ENCODE measurements at regions of chr12 and their contacts with region 1.

Region 1: DNA sequence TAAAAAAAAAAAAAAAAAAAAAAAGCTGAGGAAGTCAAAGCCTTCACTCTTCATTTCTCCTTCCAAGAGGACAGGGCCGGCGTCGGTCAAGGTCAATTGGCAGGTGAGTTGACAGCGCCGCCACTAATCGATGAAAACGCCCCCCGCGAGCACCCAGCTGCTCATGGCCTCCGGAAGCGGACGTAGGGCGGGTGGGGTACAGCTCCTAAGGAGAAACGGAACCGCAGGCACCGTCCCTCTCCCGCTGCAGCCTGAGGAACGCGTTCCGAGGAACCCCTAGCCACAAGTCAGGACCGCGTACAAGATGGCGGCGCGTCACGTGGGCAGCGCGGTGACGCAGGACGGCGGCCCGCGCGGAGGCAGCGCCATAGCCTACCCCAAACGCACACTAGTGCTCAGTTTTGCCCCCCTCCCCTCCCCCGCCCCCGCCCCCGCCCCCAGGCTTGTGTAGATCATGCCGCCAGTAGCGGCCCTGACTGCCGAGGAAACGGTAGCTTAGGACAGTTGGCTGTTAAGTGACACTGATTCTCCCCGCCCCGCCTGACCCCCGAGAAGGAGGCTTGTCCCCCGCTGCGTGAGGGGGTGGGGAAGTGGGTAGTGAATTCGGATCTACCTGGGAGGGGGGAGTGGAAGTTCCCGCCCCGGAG is at the start of gene ATF1:
- DNase-seq: peak; percentile 78 to 92 (median 90)
- ATAC-seq: peak; percentile 90
- H3K4me3 ChIP-seq: peak within 1 kb of the TSS; percentile 69
- H3K4me3 Mint-ChIP-seq: peak within 1 kb of the TSS; percentile 89 to 97 (median 91)
- H3K27ac ChIP-seq: peak within 1 kb of the TSS; percentile 94
- H3K27ac Mint-ChIP-seq: peak within 1 kb of the TSS; percentile 92 to 99 (median 98)
- H3K4me1 ChIP-seq: peaks cover 12 to 14% of the 10 kb centered on the region in 2 donors
- H3K4me1 Mint-ChIP-seq: peaks cover 30 to 51% (median 45%) of the 10 kb centered on the region in 7 donors
- H3K27me3 ChIP-seq: no peaks in the 10 kb centered on the region
- H3K27me3 Mint-ChIP-seq: no peaks in the 10 kb centered on the region
- total RNA-seq, gene ATF1: 23.8 to 53.9 (median 51.3) TPM

Region 2: GRCh38 chr12:49322708-49323523 is 1440.8 kb before region 1 on chr12 and contains the start of gene TROAP:
- CTCF ChIA-PET with region 1: no interaction called
- POLR2A ChIA-PET with region 1: no interaction called
- intact Hi-C with region 1: loop called in 1 of 2 experiments (anchors 2 kb)
- DNase-seq: peak; percentile 89 to 98 (median 96)
- ATAC-seq: peak; percentile 97
- H3K4me3 ChIP-seq: peak within 1 kb of the TSS; percentile 75
- H3K4me3 Mint-ChIP-seq: peak within 1 kb of the TSS; percentile 86 to 98 (median 92)
- H3K27ac ChIP-seq: peak within 1 kb of the TSS; percentile 72
- H3K27ac Mint-ChIP-seq: peak within 1 kb of the TSS; percentile 29 to 95 (median 83)
- H3K4me1 ChIP-seq: peaks cover 5 to 14% of the 10 kb centered on the region in 2 donors
- H3K4me1 Mint-ChIP-seq: peaks cover 16 to 25% (median 19%) of the 10 kb centered on the region in 7 donors
- H3K27me3 ChIP-seq: no peaks in the 10 kb centered on the region
- H3K27me3 Mint-ChIP-seq: peaks cover 0 to 5% (median 0%) of the 10 kb centered on the region in 5 donors
- total RNA-seq, gene TROAP: 0.83 to 58.2 (median 1.3) TPM in 4 of 5 experiments, not detected in the other

Region 3: DNA sequence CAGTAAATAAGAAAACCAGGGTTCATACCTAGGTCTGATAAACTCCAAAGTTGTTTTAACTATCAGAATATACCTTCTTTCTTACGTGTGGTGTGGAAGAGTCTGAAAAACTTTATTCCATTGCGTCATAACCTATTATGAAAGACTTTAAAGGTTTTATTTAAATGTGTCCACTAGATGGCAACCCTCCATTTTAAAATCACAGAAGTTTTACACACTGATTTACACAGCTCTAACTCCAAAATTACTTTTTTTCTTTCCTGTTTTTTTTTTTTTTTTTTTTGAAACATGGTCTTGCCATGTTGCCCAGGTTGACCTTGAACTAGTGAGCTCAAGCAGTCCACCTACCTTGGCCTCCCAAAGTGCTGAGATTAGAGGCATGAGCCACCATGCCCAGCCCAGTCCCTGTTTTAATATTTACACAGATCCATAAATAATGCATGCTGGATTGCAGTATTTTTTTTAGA is 61.6 kb after region 1 on chr12:
- CTCF ChIA-PET with region 1: interaction called, 6 read pairs
- POLR2A ChIA-PET with region 1: interaction called, 3 read pairs
- intact Hi-C with region 1: loop called (anchors 1 kb)
- DNase-seq: peak in 7 of 9 donors; percentile 45 to 76 (median 69)
- ATAC-seq: peak; percentile 91
- H3K4me3 ChIP-seq: no peak overlapping the region
- H3K4me3 Mint-ChIP-seq: peak overlapping the region in 2 of 10 donors; percentile 34 to 77
- H3K27ac ChIP-seq: peak overlapping the region; percentile 73
- H3K27ac Mint-ChIP-seq: peak overlapping the region; percentile 56 to 99 (median 91)
- H3K4me1 ChIP-seq: peaks cover 0 to 4% of the 10 kb centered on the region in 2 donors
- H3K4me1 Mint-ChIP-seq: peaks cover 0 to 9% (median 6%) of the 10 kb centered on the region in 7 donors
- H3K27me3 ChIP-seq: no peaks in the 10 kb centered on the region
- H3K27me3 Mint-ChIP-seq: no peaks in the 10 kb centered on the region

Region 4: DNA sequence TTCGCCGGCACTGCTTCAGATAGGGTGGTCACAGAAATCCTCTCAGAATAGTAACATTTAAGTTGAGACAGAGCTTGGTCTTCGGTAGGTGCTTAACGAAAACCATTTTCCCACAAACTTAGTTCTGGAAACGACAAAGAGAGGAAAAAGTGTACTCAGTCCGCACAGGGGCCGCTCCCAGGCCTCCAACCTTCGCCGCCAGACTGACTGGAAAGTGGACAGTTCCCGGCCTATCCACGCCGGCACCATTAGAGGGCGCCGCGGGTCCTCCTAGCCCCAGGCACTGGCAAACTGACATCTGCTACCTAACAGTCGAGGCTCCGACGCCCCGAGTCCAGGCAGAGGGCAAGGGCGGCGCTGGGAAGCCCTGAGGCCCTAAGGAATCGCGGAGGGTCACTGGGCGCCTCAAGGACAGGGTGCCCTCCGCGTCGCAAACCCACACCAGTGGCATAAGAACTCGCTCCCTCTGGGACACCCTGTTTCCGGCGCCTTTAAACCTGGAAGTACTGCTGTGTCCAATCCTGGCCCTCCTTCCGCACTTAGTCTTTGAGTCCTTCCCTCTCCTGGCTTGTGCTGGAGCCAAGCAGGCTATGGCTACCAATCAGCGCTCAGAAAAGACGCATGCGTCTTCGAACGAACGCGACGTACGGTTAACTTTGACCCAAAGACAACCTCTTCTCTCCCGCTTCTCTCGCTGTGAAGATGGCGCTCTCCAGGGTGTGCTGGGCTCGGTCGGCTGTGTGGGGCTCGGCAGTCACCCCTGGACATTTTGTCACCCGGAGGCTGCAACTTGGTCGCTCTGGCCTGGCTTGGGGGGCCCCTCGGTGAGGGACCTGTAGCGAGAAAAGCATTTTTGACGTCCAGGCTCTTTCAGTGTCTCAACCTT is 284.1 kb after region 1 on chr12 and contains the start of gene LETMD1:
- CTCF ChIA-PET with region 1: no interaction called
- POLR2A ChIA-PET with region 1: no interaction called
- intact Hi-C with region 1: loop called (anchors 1 to 5 kb)
- DNase-seq: peak; percentile 81 to 96 (median 95)
- ATAC-seq: peak; percentile 97
- H3K4me3 ChIP-seq: peak within 1 kb of the TSS; percentile 75
- H3K4me3 Mint-ChIP-seq: peak within 1 kb of the TSS; percentile 93 to 98 (median 96)
- H3K27ac ChIP-seq: peak within 1 kb of the TSS; percentile 81
- H3K27ac Mint-ChIP-seq: peak within 1 kb of the TSS; percentile 93 to 99 (median 96)
- H3K4me1 ChIP-seq: peaks cover 20 to 23% of the 10 kb centered on the region in 2 donors
- H3K4me1 Mint-ChIP-seq: peaks cover 15 to 44% (median 36%) of the 10 kb centered on the region in 7 donors
- H3K27me3 ChIP-seq: no peaks in the 10 kb centered on the region
- H3K27me3 Mint-ChIP-seq: no peaks in the 10 kb centered on the region
- total RNA-seq, gene LETMD1: 58.8 to 101 (median 77.0) TPM

Region 5: GRCh38 chr12:51238510-51239334 is 475.0 kb after region 1 on chr12 and contains the start of gene DAZAP2:
- CTCF ChIA-PET with region 1: no interaction called
- POLR2A ChIA-PET with region 1: interaction called, 7 read pairs
- intact Hi-C with region 1: loop called (anchors 1 kb)
- DNase-seq: peak; percentile 82 to 94 (median 92)
- ATAC-seq: peak; percentile 93
- H3K4me3 ChIP-seq: peak within 1 kb of the TSS; percentile 98
- H3K4me3 Mint-ChIP-seq: peak within 1 kb of the TSS; percentile 91 to 99 (median 97)
- H3K27ac ChIP-seq: peak within 1 kb of the TSS; percentile 100
- H3K27ac Mint-ChIP-seq: peak within 1 kb of the TSS; percentile 97 to 100 (median 100)
- H3K4me1 ChIP-seq: peaks cover 24 to 29% of the 10 kb centered on the region in 2 donors
- H3K4me1 Mint-ChIP-seq: peaks cover 36 to 50% (median 42%) of the 10 kb centered on the region in 7 donors
- H3K27me3 ChIP-seq: no peaks in the 10 kb centered on the region
- H3K27me3 Mint-ChIP-seq: peaks cover 0 to 4% (median 0%) of the 10 kb centered on the region in 5 donors
- total RNA-seq, gene DAZAP2: 231 to 306 (median 271) TPM

Region 6: DNA sequence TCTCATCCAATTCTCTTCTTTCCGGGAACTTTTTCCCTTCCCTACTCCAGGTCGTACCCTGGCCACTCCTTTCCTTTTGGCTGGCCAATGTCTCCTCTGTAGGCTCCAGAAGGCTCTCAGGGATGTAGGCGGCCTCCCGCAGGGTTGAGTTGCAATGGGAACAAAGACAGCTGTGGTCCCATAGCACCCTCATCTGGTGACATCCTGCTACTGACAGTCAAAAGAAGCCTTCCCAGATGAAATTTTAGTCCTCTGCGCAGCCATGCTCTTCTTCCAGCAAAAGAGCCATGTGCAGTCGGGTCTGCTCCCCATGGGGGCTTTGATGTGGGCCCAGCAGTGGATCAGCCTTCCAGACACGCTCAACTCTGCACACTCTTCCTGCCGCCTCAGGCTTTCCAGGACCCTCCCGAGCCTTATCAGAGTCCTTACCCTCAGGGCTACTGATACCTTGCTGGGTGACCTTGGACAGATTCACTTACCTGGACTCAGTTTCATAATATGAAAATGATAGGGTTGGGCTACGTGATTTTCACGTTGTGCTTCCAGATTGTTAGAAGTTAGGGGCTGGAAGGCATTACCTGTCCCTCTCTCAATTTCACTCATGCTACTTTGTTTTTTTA is 588.3 kb after region 1 on chr12:
- CTCF ChIA-PET with region 1: no interaction called
- POLR2A ChIA-PET with region 1: no interaction called
- intact Hi-C with region 1: loop called in 1 of 2 experiments (anchors 1 kb)
- DNase-seq: peak; percentile 8 to 64 (median 39)
- ATAC-seq: peak; percentile 89
- H3K4me3 ChIP-seq: no peak overlapping the region
- H3K4me3 Mint-ChIP-seq: no peak overlapping the region
- H3K27ac ChIP-seq: no peak overlapping the region
- H3K27ac Mint-ChIP-seq: peak overlapping the region in 4 of 9 donors; percentile 7 to 65 (median 22)
- H3K4me1 ChIP-seq: no peaks in the 10 kb centered on the region
- H3K4me1 Mint-ChIP-seq: peaks cover 0 to 10% (median 5%) of the 10 kb centered on the region in 7 donors
- H3K27me3 ChIP-seq: no peaks in the 10 kb centered on the region
- H3K27me3 Mint-ChIP-seq: peaks cover 0 to 4% (median 0%) of the 10 kb centered on the region in 5 donors

Measured in naive thymus-derived CD4-positive, alpha-beta T cell (primary cell).